A549 (cell line): ENCODE measurements at regions of chr3 and their contacts with region 1.

Region 1: GRCh38 chr3:185983495-185984141 is 45.8 kb upstream of the TRA2B start:
- DNase-seq: peak; percentile 61 to 76
- ATAC-seq: peak; percentile 80
- H3K4me3 ChIP-seq: no peak overlapping the region
- H3K27ac ChIP-seq: peak overlapping the region in 1 of 2 experiments; percentile 52; a peak in 3 of 6 replicates
- H3K4me1 ChIP-seq: peaks cover 32% of the 10 kb centered on the region
- CTCF ChIP-seq: peak; percentile 73
- EP300 ChIP-seq: no peak
- POLR2A ChIP-seq: no peak
- RAD21 ChIP-seq: peak; percentile 82 to 86

Region 2: GRCh38 chr3:186067360-186068242 is 84.0 kb after region 1 on chr3:
- CTCF ChIA-PET with region 1: no interaction called
- POLR2A ChIA-PET with region 1: no interaction called
- DNase-seq: no peak
- ATAC-seq: no peak
- H3K4me3 ChIP-seq: no peak overlapping the region
- H3K27ac ChIP-seq: no peak overlapping the region
- H3K4me1 ChIP-seq: no peaks in the 10 kb centered on the region
- CTCF ChIP-seq: no peak
- EP300 ChIP-seq: no peak
- POLR2A ChIP-seq: no peak
- RAD21 ChIP-seq: no peak

Region 3: DNA sequence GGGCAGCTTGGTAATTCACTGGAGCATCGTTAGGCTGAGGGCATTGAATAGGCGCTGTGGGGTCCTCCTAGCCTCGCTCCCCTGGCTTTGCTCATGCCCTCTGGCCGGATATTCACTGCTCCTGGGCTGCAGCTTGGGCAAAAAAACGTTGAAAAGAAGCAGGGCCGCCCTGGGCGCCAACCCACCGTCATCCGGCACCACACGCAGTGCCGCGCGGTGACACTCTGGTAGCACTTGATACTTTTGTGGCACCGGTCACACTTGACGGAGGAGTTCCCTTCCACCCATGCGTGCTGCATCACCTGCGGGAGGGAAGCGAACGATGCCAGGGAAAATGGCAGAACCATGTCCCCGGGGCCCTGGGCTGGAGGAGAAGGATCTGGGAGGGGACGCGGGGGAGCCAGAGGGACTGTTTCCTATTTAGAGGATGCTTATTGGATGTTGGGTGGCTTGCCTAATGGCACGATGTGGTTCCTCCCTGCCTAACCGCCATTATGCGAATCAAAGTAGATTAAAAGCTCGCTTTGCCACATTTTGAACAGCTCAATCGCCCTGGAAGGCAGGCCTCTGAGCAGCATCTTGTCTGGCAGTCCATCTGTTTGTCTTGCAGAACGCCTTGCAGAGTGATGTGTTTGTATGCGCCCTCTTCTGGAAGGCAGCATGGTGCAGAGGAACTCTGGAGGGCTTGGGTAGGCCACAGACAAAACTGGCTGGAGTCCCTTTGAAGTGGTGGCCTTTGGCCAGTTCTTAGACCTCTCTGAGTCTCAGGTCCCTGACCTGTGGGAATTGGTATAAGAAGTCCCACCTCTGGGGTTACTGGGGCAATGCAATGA is 285.2 kb after region 1 on chr3:
- CTCF ChIA-PET with region 1: interaction called, 11 read pairs
- POLR2A ChIA-PET with region 1: no interaction called
- DNase-seq: peak in 1 of 2 experiments; percentile 48
- ATAC-seq: peak; percentile 75 to 92; a peak in 4 of 6 replicates
- H3K4me3 ChIP-seq: no peak overlapping the region
- H3K27ac ChIP-seq: no peak overlapping the region
- H3K4me1 ChIP-seq: no peaks in the 10 kb centered on the region
- CTCF ChIP-seq: peak; percentile 30
- EP300 ChIP-seq: no peak
- POLR2A ChIP-seq: no peak
- RAD21 ChIP-seq: peak in 1 of 2 experiments; percentile 30; a peak in 1 of 5 replicates

Region 4: GRCh38 chr3:186277268-186277909 is 293.8 kb after region 1 on chr3:
- CTCF ChIA-PET with region 1: interaction called, 12 read pairs
- POLR2A ChIA-PET with region 1: no interaction called
- DNase-seq: peak in 1 of 2 experiments; percentile 51
- ATAC-seq: peak; percentile 85 to 92
- H3K4me3 ChIP-seq: no peak overlapping the region
- H3K27ac ChIP-seq: no peak overlapping the region
- H3K4me1 ChIP-seq: no peaks in the 10 kb centered on the region; the same call in 2 of the 3 replicates
- CTCF ChIP-seq: peak; percentile 53
- EP300 ChIP-seq: no peak
- POLR2A ChIP-seq: no peak
- RAD21 ChIP-seq: peak; percentile 63 to 68

Region 5: DNA sequence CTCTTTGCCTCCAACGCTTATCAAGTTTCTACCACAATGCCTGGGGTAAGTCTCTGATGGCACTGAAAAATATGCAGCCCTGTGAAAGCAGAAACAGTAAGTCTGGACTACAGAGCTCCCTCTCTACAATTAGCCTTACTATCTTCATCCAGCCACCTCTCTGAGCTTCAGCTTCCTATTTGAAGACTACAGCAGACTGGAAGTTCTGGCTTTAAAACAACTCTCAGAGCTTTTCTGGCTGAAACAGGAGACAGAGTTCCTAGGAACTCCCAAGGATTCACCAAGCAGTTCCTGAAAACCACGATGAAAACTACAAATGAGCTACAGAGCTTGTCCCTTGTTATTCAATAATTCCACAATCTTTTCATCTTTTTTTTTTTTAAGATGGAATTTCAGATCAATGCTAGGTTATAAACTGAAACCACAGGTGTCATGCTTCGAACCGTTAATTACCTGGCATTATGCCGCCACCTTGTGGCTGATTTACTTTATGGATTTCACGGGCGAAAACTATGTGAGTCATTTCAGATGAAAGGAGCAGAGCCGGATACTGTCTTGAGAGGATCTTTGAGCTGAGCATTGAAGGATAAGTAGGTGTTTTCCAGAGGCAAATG is 556.7 kb after region 1 on chr3:
- CTCF ChIA-PET with region 1: interaction called, 10 read pairs
- POLR2A ChIA-PET with region 1: no interaction called
- DNase-seq: peak; percentile 52 to 59
- ATAC-seq: peak; percentile 70 to 90; a peak in 5 of 6 replicates
- H3K4me3 ChIP-seq: no peak overlapping the region
- H3K27ac ChIP-seq: no peak overlapping the region
- H3K4me1 ChIP-seq: no peaks in the 10 kb centered on the region
- CTCF ChIP-seq: peak; percentile 79
- EP300 ChIP-seq: no peak
- POLR2A ChIP-seq: no peak
- RAD21 ChIP-seq: peak; percentile 82 to 84